GM12878 (cell line): ENCODE measurements at regions of chr5 and their contacts with region 1.

Region 1: GRCh38 chr5:160418561-160419457 is at the start of gene SLU7:
- DNase-seq: peak; percentile 91
- ATAC-seq: peak; percentile 80
- H3K4me3 ChIP-seq: peak within 1 kb of the TSS; percentile 72
- H3K27ac ChIP-seq: peak within 1 kb of the TSS; percentile 71
- H3K4me1 ChIP-seq: peaks cover 15% of the 10 kb centered on the region
- H3K27me3 ChIP-seq: no peaks in the 10 kb centered on the region
- CTCF ChIP-seq: no peak
- EP300 ChIP-seq: no peak; a peak in 1 of 4 replicates
- POLR2A ChIP-seq: peak; percentile 86
- RAD21 ChIP-seq: no peak
- polyA plus RNA-seq, gene SLU7: 40.9 to 41.2 TPM

Region 2: DNA sequence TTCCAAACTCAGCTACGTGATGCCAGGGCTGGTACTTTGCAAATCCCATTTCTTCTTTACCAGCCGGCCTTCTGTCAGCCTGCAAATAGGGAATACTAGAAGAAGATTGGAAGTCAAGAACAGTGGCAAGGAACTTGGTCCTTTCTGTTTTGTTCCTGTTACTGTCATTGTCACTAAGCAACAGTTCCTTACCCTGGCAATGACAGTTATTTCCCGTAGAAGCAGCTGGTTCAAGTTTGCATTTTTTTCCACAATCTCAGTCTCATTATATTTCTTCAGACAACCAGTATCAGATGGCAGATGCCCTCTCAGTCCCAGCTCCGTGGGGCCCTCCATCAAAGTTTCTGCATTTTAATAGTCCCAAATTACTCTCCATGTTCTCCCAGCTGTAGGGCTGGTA is 39.3 kb before region 1 on chr5:
- CTCF ChIA-PET with region 1: no interaction called
- POLR2A ChIA-PET with region 1: no interaction called
- RAD21 ChIA-PET with region 1: no interaction called
- SMC1A ChIA-PET with region 1: no interaction called
- in situ Hi-C with region 1: no loop called
- intact Hi-C with region 1: no loop called
- DNase-seq: no peak
- ATAC-seq: no peak
- H3K4me3 ChIP-seq: no peak overlapping the region
- H3K27ac ChIP-seq: no peak overlapping the region
- H3K4me1 ChIP-seq: no peaks in the 10 kb centered on the region
- H3K27me3 ChIP-seq: peaks cover 0 to 5% of the 10 kb centered on the region in 2 experiments; a peak in 1 of 4 replicates
- CTCF ChIP-seq: no peak
- EP300 ChIP-seq: no peak
- POLR2A ChIP-seq: no peak
- RAD21 ChIP-seq: no peak

Region 3: GRCh38 chr5:160399402-160400353 is 19.1 kb before region 1 on chr5 and contains the start of gene FAM200C:
- CTCF ChIA-PET with region 1: interaction called, 7 read pairs
- POLR2A ChIA-PET with region 1: interaction called, 21 read pairs
- RAD21 ChIA-PET with region 1: interaction called, 19 read pairs
- SMC1A ChIA-PET with region 1: interaction called, 6 read pairs
- in situ Hi-C with region 1: no loop called
- intact Hi-C with region 1: no loop called
- DNase-seq: peak; percentile 59
- ATAC-seq: peak; percentile 92
- H3K4me3 ChIP-seq: peak within 1 kb of the TSS; percentile 75
- H3K27ac ChIP-seq: peak within 1 kb of the TSS; percentile 84
- H3K4me1 ChIP-seq: no peaks in the 10 kb centered on the region; the same call in 1 of the 2 replicates
- H3K27me3 ChIP-seq: no peaks in the 10 kb centered on the region
- CTCF ChIP-seq: no peak
- EP300 ChIP-seq: 0 out of 4 replicates have a peak, but pooled peaks of 1 of the 2 experiments have one; percentile 7
- POLR2A ChIP-seq: peak; percentile 89
- RAD21 ChIP-seq: no peak
- polyA plus RNA-seq, gene FAM200C: 1.0 to 1.2 TPM

Region 4: DNA sequence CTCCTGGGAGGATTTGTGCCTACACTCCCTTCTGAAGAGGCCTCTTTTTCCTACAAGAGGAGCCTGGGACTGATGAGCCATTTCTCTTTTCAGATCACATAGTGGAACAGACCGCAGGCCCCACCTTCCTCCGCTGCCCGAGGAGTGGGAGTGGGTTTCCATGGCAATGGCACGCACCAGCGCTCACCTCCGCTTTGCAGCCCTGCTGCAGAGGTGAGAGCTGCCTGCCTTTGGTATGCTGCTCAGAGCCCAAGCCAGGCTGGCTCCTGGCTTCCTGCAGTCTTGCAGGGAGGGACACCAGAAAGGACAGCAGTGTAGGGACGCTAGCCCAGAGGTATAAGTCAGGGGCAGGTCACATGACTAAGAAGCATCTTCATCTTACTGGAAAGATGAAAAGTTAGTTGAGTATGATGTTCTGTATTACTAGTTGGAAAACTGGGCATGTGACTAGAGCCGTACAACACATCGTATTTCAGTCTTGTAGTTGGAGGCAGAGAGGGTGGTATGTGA is 15.3 kb after region 1 on chr5:
- CTCF ChIA-PET with region 1: interaction called, 133 read pairs
- POLR2A ChIA-PET with region 1: interaction called, 50 read pairs
- RAD21 ChIA-PET with region 1: interaction called, 109 read pairs
- SMC1A ChIA-PET with region 1: interaction called, 135 read pairs
- in situ Hi-C with region 1: no loop called
- intact Hi-C with region 1: no loop called
- DNase-seq: peak; percentile 86
- ATAC-seq: peak; percentile 81
- H3K4me3 ChIP-seq: peak overlapping the region; percentile 56; the same call in 1 of the 2 replicates
- H3K27ac ChIP-seq: peak overlapping the region; percentile 26
- H3K4me1 ChIP-seq: peaks cover 31% of the 10 kb centered on the region
- H3K27me3 ChIP-seq: no peaks in the 10 kb centered on the region
- CTCF ChIP-seq: no peak
- EP300 ChIP-seq: peak; percentile 59 to 62; a peak in 2 of 4 replicates
- POLR2A ChIP-seq: peak; percentile 33; the same call in 1 of the 2 replicates
- RAD21 ChIP-seq: no peak

Region 5: GRCh38 chr5:160445132-160445531 is 26.3 kb after region 1 on chr5:
- CTCF ChIA-PET with region 1: interaction called, 133 read pairs
- POLR2A ChIA-PET with region 1: interaction called, 50 read pairs
- RAD21 ChIA-PET with region 1: interaction called, 109 read pairs
- SMC1A ChIA-PET with region 1: interaction called, 135 read pairs
- in situ Hi-C with region 1: no loop called
- intact Hi-C with region 1: no loop called
- DNase-seq: no peak
- ATAC-seq: peak; percentile 37
- H3K4me3 ChIP-seq: no peak overlapping the region
- H3K27ac ChIP-seq: no peak overlapping the region
- H3K4me1 ChIP-seq: peaks cover 62% of the 10 kb centered on the region
- H3K27me3 ChIP-seq: no peaks in the 10 kb centered on the region
- CTCF ChIP-seq: no peak
- EP300 ChIP-seq: peak in 1 of 2 experiments; percentile 39; a peak in 1 of 4 replicates
- POLR2A ChIP-seq: no peak
- RAD21 ChIP-seq: no peak

Region 6: DNA sequence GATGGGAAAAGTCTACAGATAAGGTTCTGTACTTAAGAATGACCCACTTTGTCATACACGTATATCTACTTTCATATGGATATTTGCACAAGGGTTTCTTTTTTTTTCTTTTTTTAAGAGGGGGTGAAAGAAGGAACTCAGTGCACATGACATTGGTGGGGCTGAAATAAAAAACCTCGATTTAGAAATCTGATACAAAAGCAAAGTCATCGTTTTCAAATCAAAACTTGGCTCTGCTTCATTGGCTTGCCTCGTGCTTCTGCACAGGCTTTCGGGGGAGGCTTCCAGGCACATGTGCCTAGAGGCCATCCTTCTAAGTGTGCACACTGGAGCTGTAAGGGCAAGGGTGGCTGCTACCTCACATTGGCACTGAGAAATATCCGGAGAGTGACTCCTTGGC is 34.0 kb after region 1 on chr5:
- CTCF ChIA-PET with region 1: interaction called, 6 read pairs
- POLR2A ChIA-PET with region 1: interaction called, 36 read pairs
- RAD21 ChIA-PET with region 1: no interaction called
- SMC1A ChIA-PET with region 1: interaction called, 3 read pairs
- in situ Hi-C with region 1: no loop called
- intact Hi-C with region 1: no loop called
- DNase-seq: no peak
- ATAC-seq: peak; percentile 7; the same call in 1 of the 3 replicates
- H3K4me3 ChIP-seq: no peak overlapping the region
- H3K27ac ChIP-seq: peak overlapping the region; percentile 29
- H3K4me1 ChIP-seq: peaks cover 55% of the 10 kb centered on the region
- H3K27me3 ChIP-seq: no peaks in the 10 kb centered on the region
- CTCF ChIP-seq: no peak
- EP300 ChIP-seq: 0 out of 4 replicates have a peak, but pooled peaks of 1 of the 2 experiments have one; percentile 9
- POLR2A ChIP-seq: no peak
- RAD21 ChIP-seq: no peak

Region 7: DNA sequence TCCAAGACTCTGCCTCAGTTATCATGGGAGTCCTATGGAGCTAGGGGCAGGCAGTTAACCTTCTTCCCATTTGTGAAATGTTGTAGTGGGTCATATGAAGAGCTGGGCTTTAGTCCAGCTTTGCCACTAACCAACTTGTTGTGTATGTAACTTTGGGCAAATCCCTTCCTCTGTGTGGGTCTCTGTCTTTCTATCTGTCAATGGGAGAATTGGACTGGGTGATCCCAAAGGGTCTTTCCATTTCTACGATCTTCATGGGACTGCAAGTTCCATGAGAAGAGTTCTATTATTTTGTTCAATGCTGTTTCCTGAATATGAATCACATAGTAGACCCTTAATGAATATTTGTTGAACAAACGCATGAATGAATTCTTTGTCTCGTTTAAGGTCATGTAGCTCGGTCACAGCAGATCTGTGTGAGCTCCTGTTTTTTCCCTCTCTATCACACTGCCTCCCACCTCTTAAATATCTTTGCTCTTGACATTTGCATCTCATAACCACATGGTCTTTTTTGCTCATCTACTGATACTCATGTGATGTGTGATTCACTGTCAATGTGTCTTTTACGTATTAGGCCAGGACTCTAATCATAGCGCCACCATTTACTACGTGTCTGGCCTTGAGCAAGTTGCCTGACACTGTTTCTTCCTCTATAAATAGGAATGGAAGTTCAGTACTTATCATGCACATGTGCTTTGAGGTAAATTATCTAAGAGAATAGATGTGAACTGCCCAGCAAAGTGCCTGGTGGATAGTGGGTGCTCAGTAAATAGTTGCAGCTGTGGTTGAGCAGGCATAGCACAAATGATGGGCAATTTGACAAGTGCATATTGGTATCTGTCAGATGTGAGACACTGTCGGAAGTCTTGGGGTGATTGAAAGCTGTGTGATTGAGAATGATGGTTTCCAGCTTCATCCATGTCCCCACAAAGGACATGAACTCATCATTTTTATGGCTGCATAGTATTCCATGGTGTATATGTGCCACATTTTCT is 40.3 kb after region 1 on chr5:
- CTCF ChIA-PET with region 1: interaction called, 6 read pairs
- POLR2A ChIA-PET with region 1: interaction called, 36 read pairs
- RAD21 ChIA-PET with region 1: interaction called, 10 read pairs
- SMC1A ChIA-PET with region 1: interaction called, 15 read pairs
- in situ Hi-C with region 1: no loop called
- intact Hi-C with region 1: no loop called
- DNase-seq: peak; percentile 92
- ATAC-seq: peak; percentile 77
- H3K4me3 ChIP-seq: no peak overlapping the region
- H3K27ac ChIP-seq: peak overlapping the region; percentile 70
- H3K4me1 ChIP-seq: peaks cover 45% of the 10 kb centered on the region
- H3K27me3 ChIP-seq: no peaks in the 10 kb centered on the region
- CTCF ChIP-seq: no peak
- EP300 ChIP-seq: peak; percentile 92 to 98; a peak in 3 of 4 replicates
- POLR2A ChIP-seq: peak; percentile 60; the same call in 1 of the 2 replicates
- RAD21 ChIP-seq: no peak

Region 8: DNA sequence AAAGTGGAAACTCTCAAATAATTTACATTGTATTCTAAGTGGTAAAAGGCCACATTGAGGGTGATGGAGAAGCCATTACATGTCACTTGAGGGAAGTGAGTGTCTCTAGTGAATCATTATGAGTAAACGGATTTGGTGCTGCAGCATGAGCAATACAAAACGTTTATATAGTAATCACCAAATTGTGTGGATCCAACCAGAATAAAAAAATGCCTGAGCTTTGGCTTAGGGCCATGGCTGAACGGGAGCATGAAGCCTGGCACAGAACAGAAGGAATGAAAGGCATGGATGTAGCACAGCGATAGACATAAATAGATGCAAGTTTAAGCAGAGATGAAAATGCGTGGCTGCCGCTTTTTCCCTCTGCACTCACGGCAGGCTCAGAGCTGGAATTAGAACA is 61.1 kb after region 1 on chr5:
- CTCF ChIA-PET with region 1: interaction called, 3 read pairs
- POLR2A ChIA-PET with region 1: interaction called, 3 read pairs
- RAD21 ChIA-PET with region 1: interaction called, 3 read pairs
- SMC1A ChIA-PET with region 1: interaction called, 20 read pairs
- in situ Hi-C with region 1: no loop called
- intact Hi-C with region 1: no loop called
- DNase-seq: no peak
- ATAC-seq: peak; percentile 8; the same call in 2 of the 3 replicates
- H3K4me3 ChIP-seq: no peak overlapping the region
- H3K27ac ChIP-seq: no peak overlapping the region
- H3K4me1 ChIP-seq: peaks cover 13% of the 10 kb centered on the region; the same call in 1 of the 2 replicates
- H3K27me3 ChIP-seq: no peaks in the 10 kb centered on the region
- CTCF ChIP-seq: no peak
- EP300 ChIP-seq: no peak
- POLR2A ChIP-seq: no peak
- RAD21 ChIP-seq: no peak